Endothelial cell of umbilical vein (primary cell): ENCODE measurements at regions of chr1 and their contacts with region 1.

Region 1: GRCh38 chr1:160291248-160292220 is 6.6 kb upstream of the PEX19 start:
- DNase-seq: peak; percentile 76
- H3K4me3 ChIP-seq: no peak overlapping the region
- H3K27ac ChIP-seq: no peak overlapping the region
- H3K4me1 ChIP-seq: no peaks in the 10 kb centered on the region
- H3K27me3 ChIP-seq: no peaks in the 10 kb centered on the region
- CTCF ChIP-seq: peak; percentile 66 to 72
- POLR2A ChIP-seq: no peak

Region 2: DNA sequence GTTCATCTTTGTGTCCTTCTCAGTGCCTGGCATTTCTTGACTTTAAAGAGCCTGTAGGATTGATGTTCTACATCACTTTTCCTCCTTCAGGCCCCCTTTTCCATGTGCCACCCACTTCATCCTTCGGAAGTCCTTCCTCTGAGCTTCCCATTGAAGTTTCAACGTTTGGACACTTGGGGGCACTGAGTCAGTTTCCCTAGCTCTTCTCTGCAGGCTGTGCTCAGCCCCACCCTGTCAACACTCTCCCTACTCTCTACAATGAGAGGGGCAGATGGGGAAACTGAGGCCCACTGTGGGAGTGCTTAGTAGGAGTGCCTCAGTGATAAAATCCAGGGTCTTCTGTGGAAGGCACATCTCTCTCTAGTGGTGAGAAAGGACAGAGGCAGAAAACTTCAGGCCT is 233.4 kb before region 1 on chr1:
- CTCF ChIA-PET with region 1: no interaction called
- POLR2A ChIA-PET with region 1: no interaction called
- dilution Hi-C with region 1: no loop called
- intact Hi-C with region 1: no loop called
- DNase-seq: peak; percentile 3
- H3K4me3 ChIP-seq: no peak overlapping the region
- H3K27ac ChIP-seq: no peak overlapping the region
- H3K4me1 ChIP-seq: no peaks in the 10 kb centered on the region
- H3K27me3 ChIP-seq: peaks cover 7 to 17% of the 10 kb centered on the region in 2 experiments
- CTCF ChIP-seq: no peak
- POLR2A ChIP-seq: no peak

Region 3: DNA sequence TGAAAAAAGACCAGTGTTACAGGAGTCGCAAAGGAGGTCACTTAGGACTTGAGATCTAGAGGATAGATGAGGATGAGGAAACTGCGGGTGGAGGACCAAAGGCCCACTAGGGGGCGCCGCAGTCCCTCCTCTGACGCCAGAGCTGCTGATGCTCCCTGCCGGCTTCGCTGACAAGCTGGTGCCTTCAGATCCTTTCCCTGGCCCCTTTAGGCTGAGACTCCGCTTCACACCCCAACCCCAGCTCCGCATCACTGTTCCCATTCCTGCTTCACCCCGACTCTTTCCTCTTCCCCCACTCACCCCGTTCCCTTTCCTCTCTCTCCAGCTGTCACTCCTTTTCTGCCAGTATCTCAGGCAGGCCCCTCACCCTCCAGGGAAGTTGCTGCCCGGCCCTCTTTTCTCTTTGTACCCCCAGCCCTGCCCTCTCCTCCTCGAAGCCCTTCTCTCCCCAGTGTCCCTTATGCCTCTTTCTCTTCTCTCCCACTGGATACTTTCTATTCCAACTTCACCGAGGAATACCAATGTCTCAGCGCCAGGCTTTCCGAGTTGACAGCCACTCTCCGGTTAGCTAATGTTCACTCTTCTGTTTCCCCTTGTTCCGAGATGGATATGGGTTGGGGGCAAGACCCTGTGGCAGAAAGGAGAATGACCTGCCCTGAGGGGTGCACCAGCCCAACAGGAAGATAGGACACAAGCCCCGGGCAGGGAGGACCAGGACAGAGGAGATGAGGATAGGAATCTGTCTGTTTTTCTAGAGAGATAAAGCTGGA is 205.7 kb before region 1 on chr1:
- CTCF ChIA-PET with region 1: interaction called, 33 read pairs
- POLR2A ChIA-PET with region 1: no interaction called
- dilution Hi-C with region 1: no loop called
- intact Hi-C with region 1: no loop called
- DNase-seq: peak; percentile 65
- H3K4me3 ChIP-seq: no peak overlapping the region
- H3K27ac ChIP-seq: no peak overlapping the region
- H3K4me1 ChIP-seq: no peaks in the 10 kb centered on the region
- H3K27me3 ChIP-seq: peaks cover 35 to 37% of the 10 kb centered on the region in 2 experiments
- CTCF ChIP-seq: peak; percentile 82 to 99
- POLR2A ChIP-seq: no peak

Region 4: DNA sequence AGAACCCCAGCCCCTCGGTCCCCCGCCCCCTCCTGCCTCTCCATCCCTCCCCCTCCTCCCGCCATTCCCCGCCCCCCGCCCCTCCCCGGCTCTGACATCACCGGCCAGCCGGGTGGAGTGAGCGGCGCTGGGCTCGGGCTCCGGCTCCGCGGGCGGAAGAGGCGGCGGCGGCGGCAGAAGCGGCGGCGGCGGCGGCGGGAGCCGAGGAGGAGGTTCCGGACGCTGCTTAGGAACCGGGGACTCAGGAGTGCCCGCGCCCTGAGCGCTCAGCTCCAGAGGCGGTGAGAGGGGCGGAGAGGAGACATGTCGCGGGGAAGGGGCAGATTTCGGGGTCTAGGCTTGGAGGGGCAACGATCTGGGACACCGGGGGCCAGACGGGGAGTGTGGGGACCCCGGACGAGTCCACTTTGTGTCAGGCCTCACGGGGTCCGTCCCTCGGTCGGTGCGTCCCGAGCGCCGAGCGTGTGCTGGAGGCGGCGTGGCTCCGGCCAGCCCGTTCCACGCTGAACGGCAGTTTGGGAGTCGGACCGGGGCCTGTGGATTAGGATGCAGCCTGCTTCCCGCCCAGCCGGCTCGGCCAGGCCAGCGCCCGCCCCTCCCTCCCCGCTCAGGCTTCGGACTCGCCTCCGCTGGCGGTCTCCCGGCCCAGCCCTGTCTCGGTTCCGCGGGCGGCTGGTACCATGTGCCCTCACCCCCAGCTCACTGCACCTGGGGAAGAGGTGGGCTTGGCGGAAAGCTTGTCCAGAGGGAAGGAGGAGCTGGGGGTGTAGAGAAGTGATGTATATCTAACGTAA is 86.1 kb before region 1 on chr1 and contains the start of gene PEA15:
- CTCF ChIA-PET with region 1: interaction called, 10 read pairs
- POLR2A ChIA-PET with region 1: no interaction called
- dilution Hi-C with region 1: no loop called
- intact Hi-C with region 1: no loop called
- DNase-seq: peak; percentile 54
- H3K4me3 ChIP-seq: peak within 1 kb of the TSS; percentile 55 to 81 (median 72)
- H3K27ac ChIP-seq: peak within 1 kb of the TSS; percentile 73
- H3K4me1 ChIP-seq: peaks cover 45% of the 10 kb centered on the region
- H3K27me3 ChIP-seq: no peaks in the 10 kb centered on the region
- CTCF ChIP-seq: no peak
- POLR2A ChIP-seq: no peak
- total RNA-seq, gene PEA15: 250 and 270 TPM in 2 replicates

Region 5: DNA sequence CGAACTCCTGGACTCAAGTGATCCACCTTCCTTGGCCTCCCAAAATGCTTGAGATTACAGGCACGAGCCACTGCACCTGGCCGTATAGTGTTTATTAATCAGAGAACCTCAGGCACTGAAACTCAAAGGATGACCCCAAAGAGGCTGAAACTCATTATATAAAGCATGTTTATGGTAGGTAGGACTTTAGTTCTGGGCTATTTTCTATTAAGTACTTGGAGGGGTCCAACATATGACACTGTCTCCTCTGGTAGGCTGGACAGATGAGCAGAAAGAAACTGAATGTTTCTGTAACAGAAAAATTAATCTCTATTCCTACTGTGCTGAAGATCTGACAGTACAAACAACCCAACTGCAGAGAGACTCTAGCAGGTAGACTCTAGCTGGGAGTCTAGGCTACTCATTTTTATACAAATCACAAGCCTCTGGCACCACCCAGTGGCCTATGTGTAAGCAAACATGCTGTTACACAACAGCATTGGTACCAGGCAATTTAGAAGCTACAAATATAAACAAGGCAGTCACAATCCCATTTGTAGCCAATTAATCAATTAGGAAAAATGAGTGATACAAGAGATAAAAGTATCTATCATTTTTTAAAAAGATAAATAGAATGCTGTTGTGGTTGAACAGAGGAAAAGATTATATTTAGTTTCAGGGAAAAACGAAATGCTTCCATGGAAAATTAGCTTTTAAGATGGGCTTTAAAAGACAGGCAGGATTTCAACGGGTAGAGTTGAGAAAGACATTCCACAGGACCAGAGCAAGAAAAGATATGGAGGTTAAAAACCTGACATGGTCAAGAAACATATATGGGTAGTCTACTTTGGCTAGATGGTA is 39.6 kb before region 1 on chr1:
- CTCF ChIA-PET with region 1: interaction called, 46 read pairs
- POLR2A ChIA-PET with region 1: no interaction called
- dilution Hi-C with region 1: no loop called
- intact Hi-C with region 1: no loop called
- DNase-seq: peak; percentile 57
- H3K4me3 ChIP-seq: no peak overlapping the region
- H3K27ac ChIP-seq: no peak overlapping the region
- H3K4me1 ChIP-seq: peaks cover 5% of the 10 kb centered on the region
- H3K27me3 ChIP-seq: no peaks in the 10 kb centered on the region
- CTCF ChIP-seq: peak; percentile 49 to 64
- POLR2A ChIP-seq: no peak

Region 6: GRCh38 chr1:160277330-160277729 is 14.2 kb before region 1 on chr1:
- CTCF ChIA-PET with region 1: interaction called, 13 read pairs
- POLR2A ChIA-PET with region 1: no interaction called
- dilution Hi-C with region 1: no loop called
- intact Hi-C with region 1: no loop called
- DNase-seq: no peak
- H3K4me3 ChIP-seq: no peak overlapping the region
- H3K27ac ChIP-seq: no peak overlapping the region
- H3K4me1 ChIP-seq: no peaks in the 10 kb centered on the region
- H3K27me3 ChIP-seq: no peaks in the 10 kb centered on the region
- CTCF ChIP-seq: no peak
- POLR2A ChIP-seq: no peak

Region 7: DNA sequence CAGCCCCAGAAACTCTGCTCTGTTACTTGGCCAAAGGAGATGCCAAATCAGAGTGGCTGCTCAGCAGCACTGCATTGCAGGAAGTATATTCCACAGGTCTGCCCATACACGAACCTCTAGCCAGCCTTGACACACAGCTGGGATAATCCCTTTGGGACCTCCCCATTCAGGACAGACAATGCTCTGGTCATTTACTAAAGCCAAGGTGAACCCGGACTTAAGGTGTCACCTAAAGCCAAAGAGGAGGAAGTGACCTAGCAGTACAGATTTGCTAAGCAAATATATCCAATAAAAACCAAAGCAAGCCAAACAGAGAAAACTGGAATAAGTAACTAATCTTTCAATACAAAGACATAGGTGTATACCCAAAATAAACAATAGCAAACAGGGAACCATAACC is 23.8 kb after region 1 on chr1:
- CTCF ChIA-PET with region 1: interaction called, 14 read pairs
- POLR2A ChIA-PET with region 1: interaction called, 7 read pairs
- dilution Hi-C with region 1: no loop called
- intact Hi-C with region 1: loop called (anchors 5 kb)
- DNase-seq: no peak
- H3K4me3 ChIP-seq: no peak overlapping the region
- H3K27ac ChIP-seq: no peak overlapping the region
- H3K4me1 ChIP-seq: no peaks in the 10 kb centered on the region
- H3K27me3 ChIP-seq: no peaks in the 10 kb centered on the region
- CTCF ChIP-seq: no peak
- POLR2A ChIP-seq: no peak

Region 8: GRCh38 chr1:160342953-160343869 is 51.7 kb after region 1 on chr1 and contains the starts of genes COPA and NCSTN:
- CTCF ChIA-PET with region 1: interaction called, 15 read pairs
- POLR2A ChIA-PET with region 1: no interaction called
- dilution Hi-C with region 1: no loop called
- intact Hi-C with region 1: no loop called
- DNase-seq: peak; percentile 95
- H3K4me3 ChIP-seq: peak within 1 kb of the TSS; percentile 51 to 92 (median 73)
- H3K27ac ChIP-seq: peak within 1 kb of the TSS; percentile 73
- H3K4me1 ChIP-seq: peaks cover 36% of the 10 kb centered on the region
- H3K27me3 ChIP-seq: no peaks in the 10 kb centered on the region
- CTCF ChIP-seq: no peak
- POLR2A ChIP-seq: peak; percentile 92
- total RNA-seq, gene COPA: 167 and 185 TPM in 2 replicates
- total RNA-seq, gene NCSTN: 92.5 and 95.4 TPM in 2 replicates

Region 9: GRCh38 chr1:160618763-160619274 is 327.3 kb after region 1 on chr1:
- CTCF ChIA-PET with region 1: no interaction called
- POLR2A ChIA-PET with region 1: no interaction called
- dilution Hi-C with region 1: no loop called
- intact Hi-C with region 1: no loop called
- DNase-seq: no peak
- H3K4me3 ChIP-seq: no peak overlapping the region
- H3K27ac ChIP-seq: no peak overlapping the region
- H3K4me1 ChIP-seq: no peaks in the 10 kb centered on the region
- H3K27me3 ChIP-seq: peaks cover 0 to 4% of the 10 kb centered on the region in 2 experiments
- CTCF ChIP-seq: peak; percentile 17 to 44
- POLR2A ChIP-seq: no peak

Region 10: DNA sequence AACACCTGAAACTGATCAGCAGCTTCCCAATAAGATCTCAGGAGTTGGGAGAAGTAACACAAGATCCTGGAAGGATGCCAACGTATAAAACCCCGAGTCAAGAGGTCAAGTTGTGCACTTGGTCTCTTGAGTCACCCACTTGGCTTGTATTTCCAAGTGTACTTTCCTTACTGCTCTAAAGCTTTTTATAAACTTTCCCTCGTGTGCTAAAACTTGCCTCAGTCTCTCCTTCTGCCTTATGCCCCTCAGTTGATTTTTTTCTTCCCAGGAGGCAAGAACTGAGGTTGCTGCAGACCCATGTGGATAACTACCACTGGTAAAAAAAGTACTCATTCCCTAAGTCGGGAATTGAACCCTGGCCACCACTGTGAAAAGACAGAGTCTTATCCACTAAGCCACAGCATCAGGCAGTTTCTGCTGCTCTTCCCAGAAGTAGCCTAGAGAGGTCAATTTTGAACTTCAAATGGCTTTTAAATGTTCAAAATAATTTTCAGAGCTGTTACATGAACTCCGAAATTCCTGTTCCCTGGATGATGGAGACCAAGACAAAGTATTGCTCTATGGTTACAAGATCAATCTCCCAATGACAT is 634.2 kb after region 1 on chr1:
- CTCF ChIA-PET with region 1: no interaction called
- POLR2A ChIA-PET with region 1: no interaction called
- dilution Hi-C with region 1: no loop called
- intact Hi-C with region 1: no loop called
- DNase-seq: no peak
- H3K4me3 ChIP-seq: no peak overlapping the region
- H3K27ac ChIP-seq: no peak overlapping the region
- H3K4me1 ChIP-seq: no peaks in the 10 kb centered on the region
- H3K27me3 ChIP-seq: no peaks in the 10 kb centered on the region
- CTCF ChIP-seq: no peak
- POLR2A ChIP-seq: no peak